IMR-90 (cell line): ENCODE measurements at regions of chr2 and their contacts with region 1.

Region 1: GRCh38 chr2:100921685-100922174 is 80.4 kb upstream of the RPL31 start:
- DNase-seq: peak; percentile 88
- ATAC-seq: peak; percentile 69
- H3K4me3 ChIP-seq: no peak overlapping the region
- H3K27ac ChIP-seq: peak overlapping the region; percentile 48; the same call in 1 of the 2 replicates
- H3K4me1 ChIP-seq: peaks cover 12% of the 10 kb centered on the region
- H3K27me3 ChIP-seq: no peaks in the 10 kb centered on the region
- CTCF ChIP-seq: no peak
- POLR2A ChIP-seq: no peak
- RAD21 ChIP-seq: no peak

Region 2: GRCh38 chr2:100742277-100743254 is 179.2 kb before region 1 on chr2:
- CTCF ChIA-PET with region 1: no interaction called
- POLR2A ChIA-PET with region 1: no interaction called
- dilution Hi-C with region 1: no loop called
- in situ Hi-C with region 1: no loop called
- intact Hi-C with region 1: loop called (anchors 2 kb)
- DNase-seq: peak; percentile 98
- ATAC-seq: peak; percentile 91
- H3K4me3 ChIP-seq: no peak overlapping the region; the same call in 1 of the 2 replicates
- H3K27ac ChIP-seq: peak overlapping the region; percentile 74
- H3K4me1 ChIP-seq: peaks cover 16% of the 10 kb centered on the region
- H3K27me3 ChIP-seq: no peaks in the 10 kb centered on the region
- CTCF ChIP-seq: no peak
- POLR2A ChIP-seq: peak; percentile 68
- RAD21 ChIP-seq: peak; percentile 31